Tibial artery (tissue), 4 donors: ENCODE measurements at regions of chr12 and their contacts with region 1.

Region 1: GRCh38 chr12:2301531-2302461 is 249.0 kb downstream of the CACNA1C start:
- DNase-seq: peak; percentile 57 to 95
- H3K4me3 ChIP-seq: peak overlapping the region in 1 of 2 donors; percentile 20
- H3K27ac ChIP-seq: peak overlapping the region; percentile 63 to 81
- H3K4me1 ChIP-seq: peaks cover 0 to 99% (median 70%) of the 10 kb centered on the region in 4 donors
- H3K27me3 ChIP-seq: no peaks in the 10 kb centered on the region
- CTCF ChIP-seq: no peak

Region 2: DNA sequence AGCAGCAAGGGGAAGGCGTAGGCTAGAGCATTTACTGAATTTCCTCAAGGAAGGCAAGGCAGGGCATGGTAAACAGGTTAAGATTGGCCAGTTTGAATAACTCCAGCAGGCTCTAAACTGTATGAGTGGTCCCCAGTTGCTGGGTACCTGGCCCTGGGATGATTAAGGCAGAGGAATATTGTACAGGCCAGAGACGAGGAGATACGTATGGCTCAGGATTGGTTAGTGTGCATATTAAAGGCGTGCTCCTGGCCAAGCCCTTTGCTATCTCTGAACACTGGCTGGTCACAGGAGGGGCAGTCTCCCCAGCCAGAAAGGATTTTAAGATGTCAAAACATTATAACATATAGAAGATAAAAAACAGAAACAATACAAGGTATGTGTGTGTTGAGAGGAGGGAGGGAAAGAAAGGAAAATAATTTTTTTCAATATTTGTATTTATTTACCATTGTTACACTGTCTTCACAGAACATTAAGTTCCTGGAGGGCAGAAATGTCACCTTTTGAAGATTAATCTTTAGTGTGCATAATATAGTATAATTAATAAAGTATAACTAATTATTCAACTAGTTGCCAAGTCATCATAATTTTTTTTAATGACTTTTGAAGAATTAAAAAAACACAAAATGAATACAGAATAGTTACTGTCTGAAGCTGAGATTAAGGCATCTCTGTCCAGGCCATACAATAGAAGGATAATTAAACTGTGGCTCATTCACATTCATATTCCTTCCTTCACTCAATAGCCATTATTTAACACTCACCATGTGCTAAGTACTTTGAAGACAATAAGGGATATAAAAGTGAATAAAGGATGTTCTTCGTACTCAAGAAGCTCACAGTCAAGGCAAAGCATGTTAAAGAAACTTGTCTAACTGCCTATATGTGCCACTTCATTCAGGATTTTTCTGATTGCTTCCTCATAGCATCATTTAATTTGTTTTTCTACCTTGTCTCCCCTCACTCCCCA is 339.5 kb before region 1 on chr12:
- intact Hi-C with region 1: no loop called
- DNase-seq: no peak
- H3K4me3 ChIP-seq: no peak overlapping the region
- H3K27ac ChIP-seq: no peak overlapping the region
- H3K4me1 ChIP-seq: peaks cover 0 to 19% (median 2%) of the 10 kb centered on the region in 4 donors
- H3K27me3 ChIP-seq: no peaks in the 10 kb centered on the region
- CTCF ChIP-seq: no peak

Region 3: GRCh38 chr12:2382370-2383155 is 80.8 kb after region 1 on chr12:
- intact Hi-C with region 1: loop called (anchors 5 kb)
- DNase-seq: no peak
- H3K4me3 ChIP-seq: no peak overlapping the region
- H3K27ac ChIP-seq: peak overlapping the region; percentile 52 to 77
- H3K4me1 ChIP-seq: peaks cover 0 to 90% (median 41%) of the 10 kb centered on the region in 4 donors
- H3K27me3 ChIP-seq: no peaks in the 10 kb centered on the region
- CTCF ChIP-seq: no peak